SK-N-SH (cell line): ENCODE measurements at regions of chr3 and their contacts with region 1.

Region 1: DNA sequence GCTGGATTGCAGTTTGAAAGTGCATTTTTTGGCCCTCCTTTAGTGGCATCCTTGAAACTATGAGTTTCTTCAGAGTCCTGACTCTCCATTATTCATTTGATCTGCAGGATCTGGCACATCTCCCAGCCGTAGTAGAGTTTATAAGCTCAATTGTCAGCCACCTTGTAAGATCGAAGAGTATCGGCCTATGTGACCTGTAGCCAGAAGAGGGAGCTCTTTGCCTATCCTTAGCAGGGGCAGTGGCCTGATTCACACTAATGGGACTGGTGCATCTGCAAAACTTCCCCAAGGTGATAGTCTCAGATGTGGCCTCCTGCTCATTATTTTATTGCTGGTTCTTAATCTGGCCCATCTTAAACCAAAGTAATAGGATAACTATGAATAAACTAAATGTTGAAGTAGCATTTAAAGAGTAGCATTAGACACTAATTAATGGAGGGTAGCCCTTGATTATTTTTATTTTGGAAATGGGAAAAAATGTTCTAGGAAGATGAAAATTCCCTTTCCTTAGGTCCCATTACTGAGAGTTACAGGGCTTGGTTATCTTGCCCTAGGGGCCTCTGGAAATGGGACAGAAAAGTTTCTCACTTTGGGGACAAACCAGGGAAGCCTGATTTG is 21.2 kb downstream of the GCSAM start:
- DNase-seq: peak; percentile 70
- H3K4me3 ChIP-seq: no peak overlapping the region; a peak in 1 of 4 replicates
- H3K27ac ChIP-seq: no peak overlapping the region
- H3K4me1 ChIP-seq: no peaks in the 10 kb centered on the region; a peak in 1 of 4 replicates
- H3K27me3 ChIP-seq: no peaks in the 10 kb centered on the region
- CTCF ChIP-seq: peak; percentile 72
- EP300 ChIP-seq: no peak
- RAD21 ChIP-seq: peak; percentile 89

Region 2: GRCh38 chr3:112086076-112086854 is 25.6 kb before region 1 on chr3 and contains the start of gene C3orf52:
- CTCF ChIA-PET with region 1: interaction called, 11 read pairs
- POLR2A ChIA-PET with region 1: no interaction called
- DNase-seq: peak; percentile 94
- H3K4me3 ChIP-seq: peak within 1 kb of the TSS; percentile 60 to 69
- H3K27ac ChIP-seq: peak within 1 kb of the TSS in 1 of 2 experiments; percentile 77; a peak in 2 of 4 replicates
- H3K4me1 ChIP-seq: peaks cover 5 to 10% of the 10 kb centered on the region in 2 experiments; a peak in 2 of 4 replicates
- H3K27me3 ChIP-seq: no peaks in the 10 kb centered on the region
- CTCF ChIP-seq: peak; percentile 28
- EP300 ChIP-seq: no peak
- RAD21 ChIP-seq: no peak
- polyA plus RNA-seq, gene C3orf52: 5.4 and 8.7 TPM in 2 replicates

Region 3: DNA sequence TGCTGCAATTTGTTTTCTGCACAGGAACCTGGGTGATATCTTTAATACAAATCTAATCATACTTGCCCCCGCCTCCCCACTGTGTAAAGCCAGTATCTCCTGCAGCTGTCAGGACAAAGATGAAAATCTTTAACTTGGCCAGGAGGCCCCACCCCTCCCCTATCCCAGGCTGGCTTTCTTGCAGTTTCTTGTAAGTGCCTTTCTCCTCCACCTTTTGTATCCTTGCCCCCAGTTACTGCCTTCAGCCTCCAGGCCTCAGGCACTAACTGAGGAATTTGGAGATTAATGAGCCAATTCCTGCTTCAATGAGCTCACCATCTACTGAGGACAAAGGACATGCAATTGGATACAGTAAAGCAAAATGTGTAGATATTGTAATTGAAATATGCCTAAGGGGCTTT is 14.6 kb after region 1 on chr3:
- CTCF ChIA-PET with region 1: interaction called, 29 read pairs
- POLR2A ChIA-PET with region 1: no interaction called
- DNase-seq: no peak
- H3K4me3 ChIP-seq: no peak overlapping the region
- H3K27ac ChIP-seq: no peak overlapping the region
- H3K4me1 ChIP-seq: no peaks in the 10 kb centered on the region
- H3K27me3 ChIP-seq: no peaks in the 10 kb centered on the region
- CTCF ChIP-seq: no peak
- EP300 ChIP-seq: no peak
- RAD21 ChIP-seq: no peak

Region 4: GRCh38 chr3:112136959-112137693 is 25.2 kb after region 1 on chr3:
- CTCF ChIA-PET with region 1: interaction called, 10 read pairs
- POLR2A ChIA-PET with region 1: no interaction called
- DNase-seq: no peak
- H3K4me3 ChIP-seq: no peak overlapping the region; a peak in 1 of 4 replicates
- H3K27ac ChIP-seq: no peak overlapping the region
- H3K4me1 ChIP-seq: peaks cover 0 to 4% of the 10 kb centered on the region in 2 experiments; a peak in 2 of 4 replicates
- H3K27me3 ChIP-seq: no peaks in the 10 kb centered on the region
- CTCF ChIP-seq: peak; percentile 43
- EP300 ChIP-seq: no peak
- RAD21 ChIP-seq: peak; percentile 72